ENCODE measurements at regions of chr2 and their contacts with region 1.

Region 1: DNA sequence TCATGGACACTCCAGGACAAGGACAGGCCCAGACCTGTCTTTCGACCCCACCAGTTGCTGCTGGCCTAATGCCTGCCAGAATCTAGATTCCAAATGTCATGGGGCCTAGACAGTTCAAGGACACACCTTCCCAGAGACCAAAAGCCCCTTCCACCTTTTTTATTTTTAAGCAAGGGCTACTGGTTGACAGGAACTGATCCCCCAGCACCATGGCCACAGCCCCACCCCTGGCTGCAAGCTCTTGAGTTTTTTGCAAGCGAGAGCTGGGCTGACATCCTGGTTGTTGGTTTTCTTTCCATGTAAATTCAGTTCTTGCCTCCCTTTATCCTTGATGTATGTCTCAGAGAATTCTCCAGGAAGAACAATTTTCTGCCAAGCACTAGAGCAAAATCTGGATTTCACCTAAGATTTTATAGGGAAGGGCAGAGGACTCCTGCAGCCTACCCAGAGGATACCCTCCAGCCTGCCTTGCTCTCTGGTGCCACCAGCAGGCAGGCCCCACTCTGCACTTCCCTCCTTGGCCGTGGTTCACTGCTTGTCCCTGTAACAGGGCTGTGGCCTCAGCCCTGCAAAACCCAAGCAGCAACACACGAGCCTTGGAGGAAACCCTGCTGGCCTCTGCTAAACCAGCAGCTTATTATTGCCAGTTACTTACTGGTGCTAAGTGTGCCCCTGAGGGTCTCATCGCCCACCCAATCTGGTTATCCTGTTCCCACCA is 97.7 kb downstream of the TWIST2 start:
- DNase-seq: peak; percentile 86
- H3K4me3 ChIP-seq: no peak overlapping the region
- H3K27ac ChIP-seq: no peak overlapping the region
- H3K4me1 ChIP-seq: no peaks in the 10 kb centered on the region
- H3K27me3 ChIP-seq: no peaks in the 10 kb centered on the region
- CTCF ChIP-seq: peak; percentile 73 to 86 (median 80)
- EP300 ChIP-seq: no peak
- POLR2A ChIP-seq: no peak

Region 2: GRCh38 chr2:238370823-238371372 is 574.7 kb before region 1 on chr2:
- intact Hi-C with region 1: loop called (anchors 10 kb)
- DNase-seq: peak; percentile 78
- H3K4me3 ChIP-seq: no peak overlapping the region
- H3K27ac ChIP-seq: no peak overlapping the region
- H3K4me1 ChIP-seq: peaks cover 0 to 13% (median 2%) of the 10 kb centered on the region in 4 donors
- H3K27me3 ChIP-seq: no peaks in the 10 kb centered on the region
- CTCF ChIP-seq: peak; percentile 65 to 77 (median 72)
- EP300 ChIP-seq: no peak
- POLR2A ChIP-seq: no peak

Region 3: GRCh38 chr2:238523158-238524110 is 422.2 kb before region 1 on chr2:
- intact Hi-C with region 1: loop called (anchors 10 kb)
- DNase-seq: peak; percentile 97
- H3K4me3 ChIP-seq: peak overlapping the region in 2 of 4 donors; percentile 8 to 14
- H3K27ac ChIP-seq: peak overlapping the region; percentile 44 to 81 (median 63)
- H3K4me1 ChIP-seq: peaks cover 0 to 20% (median 15%) of the 10 kb centered on the region in 4 donors
- H3K27me3 ChIP-seq: no peaks in the 10 kb centered on the region
- CTCF ChIP-seq: peak; percentile 33 to 51 (median 40)
- EP300 ChIP-seq: peak in 2 of 4 donors; percentile 23 to 44
- POLR2A ChIP-seq: no peak

Region 4: GRCh38 chr2:238847841-238848690 is 97.5 kb before region 1 on chr2 and contains the start of gene TWIST2:
- intact Hi-C with region 1: loop called (anchors 5 kb)
- DNase-seq: peak; percentile 96
- H3K4me3 ChIP-seq: peak within 1 kb of the TSS; percentile 69 to 88 (median 87)
- H3K27ac ChIP-seq: peak within 1 kb of the TSS; percentile 90 to 97 (median 94)
- H3K4me1 ChIP-seq: peaks cover 0 to 42% (median 25%) of the 10 kb centered on the region in 4 donors
- H3K27me3 ChIP-seq: peaks cover 0 to 4% (median 3%) of the 10 kb centered on the region in 3 donors
- CTCF ChIP-seq: no peak
- EP300 ChIP-seq: no peak
- POLR2A ChIP-seq: no peak
- total RNA-seq, gene TWIST2: 53.9 to 92.2 (median 79.3) TPM

Region 5: DNA sequence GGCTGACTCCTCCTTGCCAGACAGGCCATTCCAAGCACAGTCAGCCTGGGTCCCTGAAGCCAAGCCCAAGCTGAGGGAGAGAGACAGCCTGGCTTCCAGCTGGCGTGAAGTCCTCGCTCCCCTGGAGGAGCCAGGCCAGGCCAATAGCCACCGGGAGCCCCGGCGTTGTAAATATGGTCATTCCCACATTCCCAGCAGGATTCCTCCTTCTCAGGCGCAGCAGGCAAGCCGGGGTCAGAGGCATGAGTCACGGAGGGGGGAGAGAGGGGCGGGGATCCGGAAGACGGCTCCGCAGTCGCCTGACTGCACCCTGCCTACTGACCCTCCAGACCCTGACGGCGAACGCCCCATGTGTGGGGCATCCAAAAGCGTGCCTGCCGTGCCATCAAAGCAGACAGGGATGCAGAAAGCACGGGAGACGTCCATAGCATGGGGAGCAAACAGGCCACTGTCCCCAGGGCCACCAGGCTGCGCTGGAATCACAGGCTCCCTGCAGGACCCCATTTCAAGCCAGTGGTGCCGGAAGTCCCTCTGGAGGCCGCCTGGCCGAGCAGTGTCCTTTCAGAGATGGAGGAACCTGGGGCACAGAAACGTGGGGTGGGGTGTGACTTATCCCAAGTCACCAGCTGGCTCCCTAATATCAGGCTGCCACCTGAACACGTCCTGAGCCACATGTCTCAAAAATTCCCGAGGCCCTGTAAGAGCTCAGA is 49.5 kb before region 1 on chr2:
- intact Hi-C with region 1: loop called (anchors 5 kb)
- DNase-seq: peak; percentile 94
- H3K4me3 ChIP-seq: no peak overlapping the region
- H3K27ac ChIP-seq: peak overlapping the region; percentile 38 to 83 (median 78)
- H3K4me1 ChIP-seq: peaks cover 0 to 89% (median 81%) of the 10 kb centered on the region in 4 donors
- H3K27me3 ChIP-seq: no peaks in the 10 kb centered on the region
- CTCF ChIP-seq: no peak
- EP300 ChIP-seq: no peak
- POLR2A ChIP-seq: no peak

Region 6: GRCh38 chr2:239061824-239062570 is 116.4 kb after region 1 on chr2:
- intact Hi-C with region 1: no loop called
- DNase-seq: no peak
- H3K4me3 ChIP-seq: no peak overlapping the region
- H3K27ac ChIP-seq: no peak overlapping the region
- H3K4me1 ChIP-seq: no peaks in the 10 kb centered on the region
- H3K27me3 ChIP-seq: no peaks in the 10 kb centered on the region
- CTCF ChIP-seq: no peak
- EP300 ChIP-seq: no peak
- POLR2A ChIP-seq: no peak